Activated T-helper 2 cell treated with anti-CD3 and anti-CD28 coated beads, Interferon-gamma antibody, Interleukin-2, Interleukin-4, amounts not matched to agents 10 μg/mL and 5 μg/mL and 100 μg/mL, durations not matched to agents 14 hours and 24 hours and 36 hours (primary cell): ENCODE measurements at regions of chr3 and their contacts with region 1.

Region 1: GRCh38 chr3:30658328-30659052 is 52.1 kb downstream of the TGFBR2 start:
- DNase-seq: peak; percentile 39
- H3K4me3 Mint-ChIP-seq: peak overlapping the region; percentile 76
- H3K27ac Mint-ChIP-seq: peak overlapping the region; percentile 92
- H3K4me1 Mint-ChIP-seq: peaks cover 90% of the 10 kb centered on the region
- H3K27me3 Mint-ChIP-seq: no peaks in the 10 kb centered on the region

Region 2: DNA sequence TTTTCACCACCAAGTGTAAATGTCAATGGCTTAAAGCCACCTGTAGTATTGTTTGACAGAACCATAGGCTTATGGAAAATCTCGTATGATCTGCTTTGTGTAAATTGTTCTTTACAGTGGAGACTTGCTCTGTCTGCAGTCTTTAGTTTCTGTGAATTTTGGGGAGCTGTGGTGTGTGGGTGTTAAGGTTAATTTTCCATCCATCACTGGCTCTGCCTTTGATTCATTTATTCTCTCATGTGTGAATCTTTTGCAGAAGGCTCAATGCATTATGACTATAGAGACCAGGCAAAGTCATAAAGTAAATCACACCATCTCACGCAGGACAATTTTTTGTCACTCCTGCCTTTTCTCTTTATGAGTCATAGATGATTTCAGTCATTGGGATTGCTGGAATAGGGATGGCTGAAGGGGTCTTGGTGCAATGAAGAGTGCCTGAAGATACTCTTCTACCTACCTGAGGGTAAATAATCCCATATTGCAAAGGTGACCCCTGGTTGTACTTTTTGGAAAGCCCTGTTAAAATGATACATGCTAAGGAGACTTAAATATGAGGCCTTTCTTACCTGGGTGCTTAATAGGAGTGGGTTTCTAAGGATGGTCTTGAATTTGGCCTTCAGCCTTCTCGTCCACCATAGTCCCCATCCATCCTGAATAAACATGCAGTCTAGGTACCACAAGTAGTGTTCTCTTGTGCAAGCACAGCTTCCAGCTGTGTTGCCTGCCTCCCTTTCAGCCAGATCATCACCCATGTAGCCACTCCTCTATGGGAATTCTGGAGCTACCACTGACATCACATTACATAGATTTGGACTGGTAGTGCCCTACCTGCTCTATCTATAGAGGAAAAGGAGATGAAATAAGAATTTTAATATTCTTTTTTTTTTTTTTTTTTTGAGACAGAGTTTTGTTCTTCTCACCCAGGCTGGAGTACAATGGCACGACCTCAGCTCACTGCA is 37.8 kb before region 1 on chr3:
- intact Hi-C with region 1: loop called (anchors 1 kb)
- DNase-seq: no peak
- H3K4me3 Mint-ChIP-seq: peak overlapping the region; percentile 65
- H3K27ac Mint-ChIP-seq: peak overlapping the region; percentile 96
- H3K4me1 Mint-ChIP-seq: peaks cover 83% of the 10 kb centered on the region
- H3K27me3 Mint-ChIP-seq: no peaks in the 10 kb centered on the region

Region 3: GRCh38 chr3:30672959-30673358 is 14.5 kb after region 1 on chr3:
- intact Hi-C with region 1: loop called (anchors 2 kb)
- DNase-seq: no peak
- H3K4me3 Mint-ChIP-seq: peak overlapping the region; percentile 20
- H3K27ac Mint-ChIP-seq: peak overlapping the region; percentile 23
- H3K4me1 Mint-ChIP-seq: peaks cover 80% of the 10 kb centered on the region
- H3K27me3 Mint-ChIP-seq: no peaks in the 10 kb centered on the region

Region 4: DNA sequence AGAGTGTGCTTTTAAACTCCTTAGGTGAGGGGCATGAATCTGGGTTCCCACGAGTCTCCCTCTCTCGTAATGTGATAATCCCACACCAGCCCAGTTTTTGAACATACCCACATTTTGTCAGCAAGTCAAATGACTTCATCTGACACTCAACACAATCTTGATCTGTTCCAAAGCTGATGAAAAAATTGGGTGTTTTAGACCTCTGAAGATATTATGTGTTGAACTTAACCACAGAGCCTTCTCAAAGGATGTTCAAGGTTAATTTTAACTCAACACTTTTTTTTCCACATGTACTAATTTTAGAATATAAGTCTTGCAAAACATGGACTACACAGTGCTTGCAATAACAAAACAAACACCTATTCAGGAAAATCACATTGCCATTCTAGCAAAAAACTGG is 71.0 kb after region 1 on chr3:
- intact Hi-C with region 1: no loop called
- DNase-seq: no peak
- H3K4me3 Mint-ChIP-seq: no peak overlapping the region
- H3K27ac Mint-ChIP-seq: no peak overlapping the region
- H3K4me1 Mint-ChIP-seq: peaks cover 11% of the 10 kb centered on the region
- H3K27me3 Mint-ChIP-seq: peaks cover 1% of the 10 kb centered on the region

Region 5: GRCh38 chr3:31105438-31106077 is 447.1 kb after region 1 on chr3:
- intact Hi-C with region 1: loop called (anchors 5 kb)
- DNase-seq: no peak
- H3K4me3 Mint-ChIP-seq: no peak overlapping the region
- H3K27ac Mint-ChIP-seq: no peak overlapping the region
- H3K4me1 Mint-ChIP-seq: peaks cover 42% of the 10 kb centered on the region
- H3K27me3 Mint-ChIP-seq: peaks cover 5% of the 10 kb centered on the region